ENCODE measurements at regions of chr9 and their contacts with region 1.

Region 1: GRCh38 chr9:27117489-27118135 is 8.6 kb downstream of the TEK start:
- DNase-seq: peak; percentile 84

Region 2: GRCh38 chr9:27176971-27177370 is 59.4 kb after region 1 on chr9:
- intact Hi-C with region 1: no loop called
- DNase-seq: no peak

Region 3: DNA sequence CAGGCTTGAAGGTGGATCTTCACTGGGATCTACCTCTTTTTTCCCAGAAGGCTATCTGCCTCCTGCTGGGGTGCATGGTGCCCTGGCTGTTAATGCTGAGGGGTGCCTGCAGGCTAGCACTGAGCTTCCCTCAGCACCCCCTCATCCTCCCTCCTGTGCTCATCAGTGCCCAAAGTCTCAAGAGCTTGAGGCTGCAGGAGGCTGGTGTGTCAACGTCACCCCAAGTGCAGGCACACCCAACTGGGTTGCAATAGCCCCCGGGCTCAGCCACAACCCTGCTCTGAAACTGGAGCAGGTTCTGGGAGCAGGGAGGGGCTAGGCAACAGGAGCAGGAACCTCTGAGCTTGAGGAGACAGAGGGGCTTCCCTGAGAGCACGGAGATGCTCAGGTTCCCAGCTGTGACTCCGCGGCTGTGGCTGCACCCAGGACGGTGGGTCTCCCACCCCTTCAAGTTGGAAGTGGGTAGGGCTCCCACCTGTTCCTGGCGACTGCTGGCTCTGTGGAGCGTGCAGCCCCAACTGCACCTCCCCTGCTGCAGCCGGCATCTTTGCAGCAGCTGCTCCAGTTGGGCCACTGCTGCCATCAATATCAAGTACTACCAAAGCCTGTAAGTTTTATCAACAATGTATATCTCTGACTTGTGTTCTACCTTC is 1722.3 kb after region 1 on chr9:
- intact Hi-C with region 1: loop called in 1 of 2 experiments (anchors 10 kb)
- DNase-seq: no peak

Measured in posterior vena cava (tissue), 2 donors.